ENCODE measurements at regions of chr4 and their contacts with region 1.

Region 1: DNA sequence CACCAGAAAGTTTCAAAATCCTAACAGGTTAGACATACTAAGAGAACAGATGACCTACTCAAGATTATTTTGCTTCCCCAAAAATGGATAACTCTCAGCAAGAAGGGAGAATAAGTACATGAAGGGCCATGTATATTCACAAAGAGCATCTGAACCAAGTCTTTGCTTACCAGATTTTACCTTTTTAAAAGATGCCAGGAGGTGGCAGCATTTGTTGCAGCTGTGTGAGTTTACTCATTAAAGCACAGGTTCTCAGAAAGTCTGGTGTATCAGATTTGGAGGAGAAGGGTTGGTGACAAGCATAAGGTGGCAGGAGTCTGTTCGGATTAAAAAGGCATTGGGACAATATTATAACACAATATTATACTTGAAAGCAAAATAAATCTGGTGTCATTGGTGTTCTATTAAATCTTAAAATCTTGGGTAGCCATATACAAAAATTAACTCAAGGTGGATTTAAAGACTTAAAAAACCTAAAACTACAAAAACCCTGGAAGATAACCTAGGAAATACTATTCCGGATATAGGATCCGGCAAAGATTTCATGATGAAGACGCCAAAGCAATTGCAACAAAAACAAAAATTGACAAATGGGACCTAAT is 51.3 kb upstream of the NFKB1 start:
- DNase-seq: peak; percentile 50
- ATAC-seq: peak; percentile 56; the same call in 1 of the 2 replicates
- H3K4me3 ChIP-seq: no peak overlapping the region
- H3K27ac ChIP-seq: no peak overlapping the region
- H3K4me1 ChIP-seq: no peaks in the 10 kb centered on the region
- H3K27me3 ChIP-seq: no peaks in the 10 kb centered on the region
- CTCF ChIP-seq: peak; percentile 67

Region 2: DNA sequence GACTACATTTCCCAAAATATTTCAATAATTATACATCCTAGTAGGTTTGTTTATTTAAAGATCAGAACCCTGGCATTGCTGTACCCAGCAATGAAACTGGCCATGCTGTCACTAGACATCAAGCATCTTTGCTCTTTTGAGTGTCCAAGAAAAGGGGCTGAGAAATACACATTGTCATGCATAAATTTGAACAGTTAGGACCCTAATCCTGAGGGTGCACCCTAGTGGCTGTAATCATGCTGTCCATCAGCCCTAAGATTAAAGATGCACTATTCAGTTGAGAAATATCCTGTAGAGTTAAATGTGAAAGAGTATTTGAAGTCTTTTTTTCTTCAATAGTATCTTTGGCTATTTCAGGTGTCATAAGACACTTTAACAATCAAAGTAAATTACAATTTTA is 160.2 kb after region 1 on chr4:
- CTCF ChIA-PET with region 1: no interaction called
- POLR2A ChIA-PET with region 1: no interaction called
- in situ Hi-C with region 1: no loop called
- intact Hi-C with region 1: loop called (anchors 10 kb)
- DNase-seq: no peak
- ATAC-seq: no peak
- H3K4me3 ChIP-seq: no peak overlapping the region
- H3K27ac ChIP-seq: no peak overlapping the region
- H3K4me1 ChIP-seq: no peaks in the 10 kb centered on the region
- H3K27me3 ChIP-seq: no peaks in the 10 kb centered on the region
- CTCF ChIP-seq: peak; percentile 44

Region 3: GRCh38 chr4:103008875-103009729 is 559.2 kb after region 1 on chr4:
- CTCF ChIA-PET with region 1: no interaction called
- POLR2A ChIA-PET with region 1: no interaction called
- in situ Hi-C with region 1: no loop called
- intact Hi-C with region 1: loop called (anchors 5 kb)
- DNase-seq: peak; percentile 73
- ATAC-seq: peak; percentile 94
- H3K4me3 ChIP-seq: peak overlapping the region; percentile 16 to 37
- H3K27ac ChIP-seq: no peak overlapping the region
- H3K4me1 ChIP-seq: no peaks in the 10 kb centered on the region
- H3K27me3 ChIP-seq: no peaks in the 10 kb centered on the region
- CTCF ChIP-seq: peak; percentile 63; the same call in 1 of the 2 replicates

Measured in Panc1 (cell line).